HepG2 (cell line): ENCODE measurements at regions of chr5 and their contacts with region 1.

Region 1: GRCh38 chr5:6435356-6435755 is 13.3 kb upstream of the UBE2QL1 start:
- DNase-seq: peak; percentile 19
- ATAC-seq: peak; percentile 95
- H3K4me3 ChIP-seq: no peak overlapping the region
- H3K27ac ChIP-seq: no peak overlapping the region
- H3K4me1 ChIP-seq: no peaks in the 10 kb centered on the region
- H3K27me3 ChIP-seq: peaks cover 1 to 10% of the 10 kb centered on the region in 2 experiments; a peak in 4 of 5 replicates
- CTCF ChIP-seq: peak; percentile 73
- EP300 ChIP-seq: no peak
- POLR2A ChIP-seq: no peak
- RAD21 ChIP-seq: 0 out of 2 replicates have a peak, but pooled peaks have one; percentile 25

Region 2: GRCh38 chr5:5492087-5492933 is 943.0 kb before region 1 on chr5:
- CTCF ChIA-PET with region 1: interaction called, 3 read pairs
- POLR2A ChIA-PET with region 1: no interaction called
- in situ Hi-C with region 1: loop called (anchors 10 kb)
- intact Hi-C with region 1: no loop called
- DNase-seq: peak; percentile 54
- ATAC-seq: peak; percentile 38; the same call in 2 of the 3 replicates
- H3K4me3 ChIP-seq: no peak overlapping the region
- H3K27ac ChIP-seq: no peak overlapping the region
- H3K4me1 ChIP-seq: no peaks in the 10 kb centered on the region; the same call in 1 of the 2 replicates
- H3K27me3 ChIP-seq: peaks cover 0 to 6% of the 10 kb centered on the region in 2 experiments; a peak in 2 of 5 replicates
- CTCF ChIP-seq: peak; percentile 71
- EP300 ChIP-seq: no peak
- POLR2A ChIP-seq: no peak
- RAD21 ChIP-seq: peak; percentile 45; the same call in 1 of the 2 replicates

Region 3: GRCh38 chr5:5886812-5887486 is 548.4 kb before region 1 on chr5:
- CTCF ChIA-PET with region 1: no interaction called
- POLR2A ChIA-PET with region 1: no interaction called
- in situ Hi-C with region 1: no loop called
- intact Hi-C with region 1: loop called (anchors 10 kb)
- DNase-seq: peak; percentile 3
- ATAC-seq: peak; percentile 99
- H3K4me3 ChIP-seq: no peak overlapping the region
- H3K27ac ChIP-seq: no peak overlapping the region
- H3K4me1 ChIP-seq: no peaks in the 10 kb centered on the region
- H3K27me3 ChIP-seq: peaks cover 0 to 3% of the 10 kb centered on the region in 2 experiments; a peak in 1 of 5 replicates
- CTCF ChIP-seq: peak; percentile 83
- EP300 ChIP-seq: no peak
- POLR2A ChIP-seq: no peak
- RAD21 ChIP-seq: 0 out of 2 replicates have a peak, but pooled peaks have one; percentile 53

Region 4: GRCh38 chr5:6291961-6292360 is 143.4 kb before region 1 on chr5:
- CTCF ChIA-PET with region 1: no interaction called
- POLR2A ChIA-PET with region 1: no interaction called
- in situ Hi-C with region 1: no loop called
- intact Hi-C with region 1: loop called (anchors 1 kb)
- DNase-seq: peak; percentile 38
- ATAC-seq: peak; percentile 75
- H3K4me3 ChIP-seq: no peak overlapping the region
- H3K27ac ChIP-seq: no peak overlapping the region
- H3K4me1 ChIP-seq: no peaks in the 10 kb centered on the region
- H3K27me3 ChIP-seq: no peaks in the 10 kb centered on the region
- CTCF ChIP-seq: peak; percentile 53
- EP300 ChIP-seq: no peak
- POLR2A ChIP-seq: no peak
- RAD21 ChIP-seq: 0 out of 2 replicates have a peak, but pooled peaks have one; percentile 12

Region 5: GRCh38 chr5:6704361-6704851 is 269.1 kb after region 1 on chr5:
- CTCF ChIA-PET with region 1: no interaction called
- POLR2A ChIA-PET with region 1: no interaction called
- in situ Hi-C with region 1: no loop called
- intact Hi-C with region 1: no loop called
- DNase-seq: no peak
- ATAC-seq: no peak
- H3K4me3 ChIP-seq: no peak overlapping the region
- H3K27ac ChIP-seq: no peak overlapping the region
- H3K4me1 ChIP-seq: peaks cover 4% of the 10 kb centered on the region
- H3K27me3 ChIP-seq: peaks cover 0 to 41% of the 10 kb centered on the region in 2 experiments; a peak in 4 of 5 replicates
- CTCF ChIP-seq: no peak
- EP300 ChIP-seq: no peak
- POLR2A ChIP-seq: no peak
- RAD21 ChIP-seq: no peak